ENCODE measurements at regions of chr1 and their contacts with region 1.

Region 1: GRCh38 chr1:27300341-27301051 is 21.5 kb upstream of the TMEM222 start:
- DNase-seq: peak; percentile 92 to 96 (median 93)
- H3K4me3 ChIP-seq: no peak overlapping the region
- H3K27ac ChIP-seq: no peak overlapping the region
- H3K4me1 ChIP-seq: peaks cover 0 to 29% (median 21%) of the 10 kb centered on the region in 4 experiments
- H3K27me3 ChIP-seq: no peaks in the 10 kb centered on the region

Region 2: DNA sequence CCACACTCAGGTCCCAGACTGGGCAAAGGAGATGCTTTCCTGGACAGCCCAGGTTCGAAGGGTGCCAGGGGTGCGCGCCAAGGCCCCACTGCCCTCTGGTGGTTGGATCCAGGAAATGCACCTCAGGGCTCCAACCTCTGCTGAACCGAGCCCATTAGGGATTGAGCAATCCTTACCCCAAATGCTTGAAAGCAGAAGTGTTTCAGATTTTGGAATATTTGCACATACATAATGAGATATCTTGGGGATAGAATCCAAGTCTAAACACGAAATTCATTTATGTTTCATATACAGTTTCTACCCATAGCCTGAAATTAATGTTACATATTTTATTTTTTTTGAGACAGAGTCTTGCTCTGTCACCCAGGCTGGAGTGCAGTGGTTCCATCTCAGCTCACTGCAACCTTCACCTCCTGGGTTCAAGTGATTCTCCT is 203.0 kb before region 1 on chr1:
- CTCF ChIA-PET with region 1: interaction called, 73 read pairs
- POLR2A ChIA-PET with region 1: no interaction called
- DNase-seq: peak; percentile 81 to 91 (median 88)
- H3K4me3 ChIP-seq: no peak overlapping the region
- H3K27ac ChIP-seq: no peak overlapping the region
- H3K4me1 ChIP-seq: peaks cover 0 to 26% (median 24%) of the 10 kb centered on the region in 4 experiments
- H3K27me3 ChIP-seq: no peaks in the 10 kb centered on the region

Region 3: DNA sequence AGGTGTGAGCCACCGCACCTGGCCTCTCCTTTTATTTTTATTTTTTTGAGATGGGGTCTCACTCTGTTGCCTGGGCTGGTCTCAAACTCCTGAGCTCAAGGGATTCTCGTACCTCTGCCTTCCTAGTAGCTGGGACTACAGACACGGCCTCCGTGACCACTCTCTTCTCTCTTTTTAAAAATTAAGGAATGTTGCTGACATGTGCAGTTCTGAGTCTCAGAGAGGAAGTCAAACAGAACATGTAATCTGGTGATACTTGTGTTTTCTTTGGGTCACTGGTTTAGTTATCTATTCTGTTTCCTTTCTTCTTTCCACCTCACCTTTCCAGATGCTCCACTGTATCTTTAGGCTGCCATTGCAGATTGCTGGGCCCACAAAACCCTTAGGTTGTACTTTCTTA is 63.4 kb before region 1 on chr1:
- CTCF ChIA-PET with region 1: no interaction called
- POLR2A ChIA-PET with region 1: no interaction called
- DNase-seq: no peak
- H3K4me3 ChIP-seq: no peak overlapping the region
- H3K27ac ChIP-seq: no peak overlapping the region
- H3K4me1 ChIP-seq: peaks cover 8 to 22% (median 20%) of the 10 kb centered on the region in 4 experiments
- H3K27me3 ChIP-seq: no peaks in the 10 kb centered on the region

Region 4: DNA sequence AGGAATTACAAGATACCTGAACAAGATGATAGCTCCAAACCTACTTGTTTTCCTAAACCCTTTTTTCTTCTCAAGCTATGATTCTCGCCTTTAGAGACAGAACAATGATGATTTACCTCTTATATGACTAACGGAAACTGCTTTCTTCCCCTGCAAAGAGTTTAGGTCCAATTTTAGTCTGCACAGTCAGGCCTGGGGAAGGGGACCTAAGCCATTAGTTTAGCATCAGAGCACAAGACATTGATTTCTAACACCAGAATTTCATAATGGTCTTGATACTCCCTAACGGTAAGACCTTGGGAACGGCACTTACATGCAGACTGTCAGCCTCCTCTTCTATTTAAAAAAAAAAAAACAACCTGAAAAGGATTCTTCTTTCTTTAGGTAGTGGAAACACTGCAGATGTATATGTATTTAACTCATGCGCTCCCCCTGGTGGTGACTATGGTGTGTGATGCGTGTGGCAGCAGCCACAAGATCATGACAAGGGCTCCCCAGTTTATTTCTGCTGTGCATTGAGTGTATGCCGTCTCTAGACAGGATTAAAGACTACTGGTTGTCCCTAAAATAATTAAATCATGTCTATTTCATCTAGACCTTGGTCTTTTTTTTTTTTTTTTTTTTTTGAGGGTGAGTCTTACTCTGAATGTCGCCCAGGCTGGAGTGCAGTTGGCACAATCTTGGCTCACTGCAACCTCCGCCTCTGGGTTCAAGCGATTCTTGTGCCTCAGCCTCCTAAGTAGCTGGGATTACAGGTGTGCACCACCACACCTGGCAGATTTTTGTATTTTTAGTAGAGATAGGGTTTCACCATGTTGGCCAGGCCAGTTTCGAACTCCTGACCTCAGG is 15.8 kb before region 1 on chr1:
- CTCF ChIA-PET with region 1: interaction called, 28 read pairs
- POLR2A ChIA-PET with region 1: no interaction called
- DNase-seq: peak; percentile 81 to 92 (median 87)
- H3K4me3 ChIP-seq: no peak overlapping the region
- H3K27ac ChIP-seq: no peak overlapping the region
- H3K4me1 ChIP-seq: no peaks in the 10 kb centered on the region
- H3K27me3 ChIP-seq: no peaks in the 10 kb centered on the region

Region 5: GRCh38 chr1:27321813-27322577 is 21.5 kb after region 1 on chr1 and contains the start of gene TMEM222:
- CTCF ChIA-PET with region 1: interaction called, 11 read pairs
- POLR2A ChIA-PET with region 1: no interaction called
- DNase-seq: peak; percentile 98 to 99 (median 98)
- H3K4me3 ChIP-seq: peak within 1 kb of the TSS; percentile 74 to 100 (median 99)
- H3K27ac ChIP-seq: peak within 1 kb of the TSS; percentile 97 to 98
- H3K4me1 ChIP-seq: peaks cover 10 to 19% (median 14%) of the 10 kb centered on the region in 4 experiments
- H3K27me3 ChIP-seq: peaks cover 0 to 3% (median 2%) of the 10 kb centered on the region in 5 experiments

Region 6: GRCh38 chr1:27357281-27358037 is 57.0 kb after region 1 on chr1:
- CTCF ChIA-PET with region 1: interaction called, 30 read pairs
- POLR2A ChIA-PET with region 1: no interaction called
- DNase-seq: peak; percentile 75 to 85 (median 84)
- H3K4me3 ChIP-seq: peak overlapping the region in 4 of 7 experiments; percentile 19 to 73 (median 55)
- H3K27ac ChIP-seq: no peak overlapping the region
- H3K4me1 ChIP-seq: peaks cover 0 to 33% (median 19%) of the 10 kb centered on the region in 4 experiments
- H3K27me3 ChIP-seq: no peaks in the 10 kb centered on the region

Region 7: DNA sequence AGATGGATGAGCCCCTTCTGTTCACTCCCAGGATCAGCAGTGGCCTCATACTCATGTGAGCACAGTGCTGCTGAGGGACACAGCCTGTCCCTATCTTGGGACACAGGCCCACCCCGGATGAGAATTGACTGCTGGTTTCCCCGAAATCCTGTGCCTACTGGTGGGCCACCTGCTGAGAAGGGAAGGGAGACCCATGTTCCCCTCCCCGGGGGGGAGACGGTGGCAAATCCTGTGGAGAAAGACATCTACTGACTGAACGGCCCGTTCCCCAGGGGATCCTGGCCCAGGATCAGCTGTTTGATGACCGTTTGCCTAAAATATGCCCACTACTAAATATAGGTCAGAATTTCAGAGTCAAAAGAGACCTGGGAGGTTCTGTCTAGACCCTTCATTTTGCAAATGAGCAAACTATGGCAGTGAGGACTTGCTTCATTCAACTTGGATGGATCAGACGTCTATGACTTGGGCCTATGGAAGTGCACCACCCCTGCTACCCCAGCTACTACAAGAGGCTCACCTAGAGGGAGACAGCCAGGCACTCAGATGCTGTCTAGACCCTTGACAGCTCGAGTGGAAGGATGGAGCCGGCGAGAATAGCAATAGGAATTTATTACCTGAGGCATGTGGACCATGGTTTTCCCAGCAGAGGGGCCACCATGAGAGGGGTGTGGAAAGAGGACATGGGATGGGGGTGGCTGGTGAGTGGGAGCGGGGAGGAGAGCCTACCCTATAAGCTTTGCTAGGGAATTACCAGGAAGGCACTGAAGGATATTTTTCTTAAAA is 556.3 kb after region 1 on chr1:
- CTCF ChIA-PET with region 1: no interaction called
- POLR2A ChIA-PET with region 1: no interaction called
- DNase-seq: no peak
- H3K4me3 ChIP-seq: no peak overlapping the region
- H3K27ac ChIP-seq: no peak overlapping the region
- H3K4me1 ChIP-seq: peaks cover 0 to 10% (median 6%) of the 10 kb centered on the region in 4 experiments
- H3K27me3 ChIP-seq: no peaks in the 10 kb centered on the region

Measured in common myeloid progenitor, CD34-positive (primary cell).